SK-N-SH (cell line): ENCODE measurements at regions of chr6 and their contacts with region 1.

Region 1: GRCh38 chr6:101114703-101115102 is 233.6 kb upstream of the ASCC3 start:
- DNase-seq: peak; percentile 48
- H3K4me3 ChIP-seq: no peak overlapping the region; a peak in 1 of 4 replicates
- H3K27ac ChIP-seq: no peak overlapping the region
- H3K4me1 ChIP-seq: peaks cover 0 to 8% of the 10 kb centered on the region in 2 experiments; a peak in 3 of 4 replicates
- H3K27me3 ChIP-seq: no peaks in the 10 kb centered on the region
- CTCF ChIP-seq: peak; percentile 59
- EP300 ChIP-seq: no peak
- RAD21 ChIP-seq: peak; percentile 91

Region 2: DNA sequence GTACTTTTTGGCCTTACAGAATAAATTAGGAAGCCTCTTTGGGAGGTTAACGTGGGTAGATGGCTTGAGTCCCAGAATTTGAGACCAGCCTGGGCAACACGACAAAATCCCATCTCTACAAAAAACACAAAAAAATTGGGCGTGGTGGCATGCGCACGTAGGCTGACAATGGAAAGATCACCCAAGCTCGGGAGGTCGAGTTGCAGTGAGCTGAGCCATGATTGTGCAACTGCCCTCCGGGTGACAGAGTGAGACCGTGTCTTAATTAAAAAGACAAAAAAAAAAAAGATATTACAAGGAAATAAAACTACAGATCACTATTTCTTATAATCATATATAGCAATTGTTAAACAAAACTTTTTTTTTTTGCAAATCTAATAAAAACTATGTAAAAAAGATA is 190.1 kb before region 1 on chr6:
- CTCF ChIA-PET with region 1: no interaction called
- POLR2A ChIA-PET with region 1: no interaction called
- DNase-seq: no peak
- H3K4me3 ChIP-seq: no peak overlapping the region
- H3K27ac ChIP-seq: no peak overlapping the region
- H3K4me1 ChIP-seq: no peaks in the 10 kb centered on the region
- H3K27me3 ChIP-seq: no peaks in the 10 kb centered on the region
- CTCF ChIP-seq: no peak
- EP300 ChIP-seq: no peak
- RAD21 ChIP-seq: no peak

Region 3: GRCh38 chr6:101102702-101103101 is 12.0 kb before region 1 on chr6:
- CTCF ChIA-PET with region 1: interaction called, 10 read pairs
- POLR2A ChIA-PET with region 1: no interaction called
- DNase-seq: no peak
- H3K4me3 ChIP-seq: no peak overlapping the region
- H3K27ac ChIP-seq: no peak overlapping the region
- H3K4me1 ChIP-seq: no peaks in the 10 kb centered on the region
- H3K27me3 ChIP-seq: no peaks in the 10 kb centered on the region
- CTCF ChIP-seq: no peak
- EP300 ChIP-seq: no peak
- RAD21 ChIP-seq: no peak

Region 4: GRCh38 chr6:101393251-101393828 is 278.6 kb after region 1 on chr6 and contains the start of gene GRIK2:
- CTCF ChIA-PET with region 1: interaction called, 40 read pairs
- POLR2A ChIA-PET with region 1: no interaction called
- DNase-seq: peak; percentile 81
- H3K4me3 ChIP-seq: peak within 1 kb of the TSS; percentile 53 to 57
- H3K27ac ChIP-seq: no peak within 1 kb of the TSS; a peak in 1 of 4 replicates
- H3K4me1 ChIP-seq: peaks cover 0 to 9% of the 10 kb centered on the region in 2 experiments; a peak in 2 of 4 replicates
- H3K27me3 ChIP-seq: peaks cover 25% of the 10 kb centered on the region
- CTCF ChIP-seq: peak; percentile 45; the same call in 1 of the 2 replicates
- EP300 ChIP-seq: no peak
- RAD21 ChIP-seq: peak; percentile 45
- polyA plus RNA-seq, gene GRIK2: 0.26 and 0.30 TPM in 2 replicates